ENCODE measurements at regions of chr2 and their contacts with region 1.

Region 1: GRCh38 chr2:120312861-120313694 is 32.9 kb upstream of the INHBB start:
- H3K4me3 ChIP-seq: peak overlapping the region; percentile 20
- H3K27ac ChIP-seq: no peak overlapping the region
- H3K4me1 ChIP-seq: no peaks in the 10 kb centered on the region
- CTCF ChIP-seq: peak; percentile 86

Region 2: DNA sequence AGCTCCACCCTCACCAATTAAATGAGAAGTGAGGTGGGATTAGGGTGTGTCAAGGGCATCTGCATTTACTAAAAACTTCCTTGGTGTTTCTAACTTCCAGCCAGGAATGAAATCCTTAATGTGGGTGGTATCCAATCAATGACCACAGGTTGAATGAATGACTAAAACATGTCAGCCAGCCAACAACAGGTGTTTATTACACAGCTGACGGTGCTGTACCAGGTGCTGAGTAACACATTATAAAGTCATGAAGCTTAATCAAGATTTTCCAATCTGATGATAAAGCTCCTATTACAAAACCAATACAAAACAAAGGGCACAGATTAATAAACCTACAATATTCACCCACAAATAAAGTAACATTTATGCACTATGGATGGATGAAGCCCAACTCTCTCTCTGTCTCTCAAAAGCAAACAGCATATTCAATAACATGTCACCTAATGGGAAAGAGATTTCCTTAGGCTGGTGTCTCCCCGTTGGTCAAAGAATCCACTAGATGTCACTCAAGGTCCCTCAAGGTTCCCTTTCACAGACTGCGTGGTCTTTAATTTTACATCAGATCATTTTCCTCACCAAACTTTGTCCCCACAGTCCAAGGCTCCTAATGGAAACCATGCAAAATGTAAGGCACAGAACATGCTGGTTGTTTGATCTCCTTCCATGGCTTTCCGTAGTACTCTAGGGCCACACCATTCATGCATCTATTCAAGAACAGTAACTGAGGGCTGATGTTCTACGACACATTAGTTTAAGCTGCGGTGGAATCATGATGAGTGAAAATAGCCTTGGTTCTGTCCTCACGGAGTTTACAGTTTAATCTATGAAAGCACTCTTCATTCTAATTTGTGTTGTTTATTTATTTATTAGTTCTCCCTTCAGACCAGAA is 559.8 kb before region 1 on chr2:
- CTCF ChIA-PET with region 1: interaction called, 16 read pairs
- POLR2A ChIA-PET with region 1: no interaction called
- H3K4me3 ChIP-seq: no peak overlapping the region
- H3K27ac ChIP-seq: no peak overlapping the region
- H3K4me1 ChIP-seq: no peaks in the 10 kb centered on the region
- CTCF ChIP-seq: peak; percentile 55; the same call in 1 of the 2 replicates

Region 3: GRCh38 chr2:120206022-120206581 is 107.0 kb before region 1 on chr2:
- CTCF ChIA-PET with region 1: interaction called, 22 read pairs
- POLR2A ChIA-PET with region 1: no interaction called
- H3K4me3 ChIP-seq: no peak overlapping the region
- H3K27ac ChIP-seq: no peak overlapping the region
- H3K4me1 ChIP-seq: no peaks in the 10 kb centered on the region
- CTCF ChIP-seq: peak; percentile 33; the same call in 1 of the 2 replicates

Region 4: DNA sequence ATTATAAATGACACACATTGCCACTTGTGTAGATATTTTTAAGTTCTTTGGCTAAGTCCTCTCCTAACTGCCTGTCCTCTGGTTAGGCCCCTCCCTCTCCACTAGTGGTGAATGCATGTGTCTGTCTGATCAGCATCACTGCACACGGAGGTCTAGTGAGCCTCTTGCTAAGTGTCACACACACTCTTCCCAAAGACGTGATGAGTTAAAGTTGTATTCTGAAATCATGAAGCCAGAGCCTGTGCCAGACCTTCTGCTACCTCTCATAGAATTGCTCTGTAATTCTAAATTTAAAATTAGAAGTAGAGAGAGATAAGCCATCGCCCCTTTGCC is 19.1 kb before region 1 on chr2:
- CTCF ChIA-PET with region 1: interaction called, 74 read pairs
- POLR2A ChIA-PET with region 1: no interaction called
- H3K4me3 ChIP-seq: no peak overlapping the region
- H3K27ac ChIP-seq: no peak overlapping the region
- H3K4me1 ChIP-seq: no peaks in the 10 kb centered on the region
- CTCF ChIP-seq: no peak

Region 5: GRCh38 chr2:120680136-120680761 is 367.2 kb after region 1 on chr2:
- CTCF ChIA-PET with region 1: interaction called, 50 read pairs
- POLR2A ChIA-PET with region 1: no interaction called
- H3K4me3 ChIP-seq: no peak overlapping the region
- H3K27ac ChIP-seq: no peak overlapping the region
- H3K4me1 ChIP-seq: no peaks in the 10 kb centered on the region
- CTCF ChIP-seq: peak; percentile 87

Measured in HEK293 (cell line).